Endothelial cell of umbilical vein (primary cell): ENCODE measurements at regions of chr1 and their contacts with region 1.

Region 1: DNA sequence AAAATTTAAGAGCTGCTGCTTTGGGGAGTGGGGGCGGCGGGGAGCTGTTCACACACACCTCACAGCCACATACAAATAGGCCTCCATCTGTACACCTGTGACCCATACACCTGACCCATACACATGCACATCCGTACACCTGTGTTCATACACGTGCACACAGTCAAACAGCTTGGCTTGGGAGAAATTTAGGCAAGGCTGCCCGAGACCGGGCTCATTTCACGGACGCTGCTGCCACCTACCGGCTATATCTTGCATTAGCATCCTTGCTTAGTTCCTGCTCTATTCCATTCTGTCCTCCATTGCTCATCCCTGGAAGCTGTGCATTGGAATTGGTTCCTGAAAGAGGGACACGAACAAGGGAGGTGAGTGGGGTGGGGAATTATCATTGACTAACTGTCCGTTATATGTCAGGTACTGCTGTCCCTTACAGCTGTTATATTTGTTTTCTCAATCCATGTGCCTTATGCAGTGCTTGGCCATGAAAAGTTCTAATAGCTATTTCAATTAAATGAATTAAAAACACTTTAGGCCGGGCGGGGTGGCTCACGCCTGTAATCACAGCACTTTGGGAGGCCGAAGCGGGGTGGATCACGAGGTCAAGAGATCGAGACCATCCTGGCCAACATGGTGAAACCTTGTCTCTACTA is 37.1 kb upstream of the EPB41 start:
- DNase-seq: peak; percentile 73
- H3K4me3 ChIP-seq: no peak overlapping the region
- H3K27ac ChIP-seq: no peak overlapping the region
- H3K4me1 ChIP-seq: no peaks in the 10 kb centered on the region
- H3K27me3 ChIP-seq: no peaks in the 10 kb centered on the region
- CTCF ChIP-seq: peak; percentile 86 to 92
- POLR2A ChIP-seq: no peak

Region 2: DNA sequence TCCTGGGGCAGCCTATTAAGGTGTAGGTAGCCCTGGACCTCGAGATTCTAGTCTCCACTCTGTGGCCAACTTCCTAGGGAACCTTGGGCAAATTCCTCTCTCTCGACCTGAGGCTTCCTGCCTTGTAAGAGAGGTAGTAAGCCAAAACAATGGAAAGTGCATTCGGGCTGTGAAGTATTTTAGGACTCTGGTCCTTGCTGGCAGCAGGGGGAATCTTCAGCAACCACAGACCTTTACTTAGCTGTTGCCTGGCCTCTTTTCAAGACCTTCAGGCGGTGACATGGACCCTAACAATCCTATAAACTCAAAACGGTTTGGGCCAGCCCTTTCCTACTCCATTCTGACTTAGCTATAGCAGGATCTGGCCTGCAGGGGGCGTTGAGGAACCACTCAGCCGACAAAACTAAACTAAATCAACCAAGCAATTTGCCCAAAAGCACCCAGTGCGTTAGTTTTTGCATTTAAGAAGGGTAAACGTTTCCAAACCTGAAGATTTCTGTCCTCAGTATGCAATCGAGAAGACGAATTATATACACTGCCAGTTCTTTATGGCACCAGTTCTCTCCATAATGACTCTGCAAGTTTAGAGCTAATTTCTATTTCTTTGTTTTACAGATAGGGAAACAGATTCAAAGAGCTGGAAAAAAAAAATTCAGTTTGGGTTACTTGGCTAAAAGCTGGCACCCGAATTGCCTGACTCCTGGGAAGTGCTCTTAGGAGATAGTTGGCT is 628.8 kb before region 1 on chr1:
- CTCF ChIA-PET with region 1: interaction called, 15 read pairs
- POLR2A ChIA-PET with region 1: no interaction called
- dilution Hi-C with region 1: no loop called
- intact Hi-C with region 1: loop called (anchors 2 kb)
- DNase-seq: peak; percentile 85
- H3K4me3 ChIP-seq: peak overlapping the region in 1 of 3 experiments; percentile 10
- H3K27ac ChIP-seq: peak overlapping the region; percentile 22
- H3K4me1 ChIP-seq: peaks cover 25% of the 10 kb centered on the region
- H3K27me3 ChIP-seq: no peaks in the 10 kb centered on the region
- CTCF ChIP-seq: peak; percentile 91 to 96
- POLR2A ChIP-seq: no peak

Region 3: DNA sequence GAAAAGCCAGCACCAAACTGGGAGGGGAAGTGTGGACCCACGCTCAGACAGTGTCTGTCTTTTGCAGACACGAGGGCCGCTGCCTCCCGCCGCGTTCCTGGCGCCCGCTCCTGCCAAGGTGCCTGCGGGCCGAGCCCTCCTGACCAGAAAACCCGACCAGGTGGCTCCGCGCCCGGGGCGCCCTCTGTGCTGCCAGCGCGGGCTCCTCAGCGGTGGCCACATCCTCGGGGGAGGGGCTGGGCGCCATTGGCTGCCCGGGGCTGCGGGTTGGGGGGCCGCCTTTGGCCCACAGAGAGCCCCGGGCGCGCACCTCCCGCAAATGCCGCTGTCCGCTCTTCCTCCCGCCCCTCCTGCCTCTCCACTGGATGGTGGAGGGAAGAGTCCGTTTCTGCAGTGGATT is 346.8 kb before region 1 on chr1:
- CTCF ChIA-PET with region 1: no interaction called
- POLR2A ChIA-PET with region 1: no interaction called
- dilution Hi-C with region 1: no loop called
- intact Hi-C with region 1: no loop called
- DNase-seq: no peak
- H3K4me3 ChIP-seq: no peak overlapping the region
- H3K27ac ChIP-seq: no peak overlapping the region
- H3K4me1 ChIP-seq: no peaks in the 10 kb centered on the region
- H3K27me3 ChIP-seq: no peaks in the 10 kb centered on the region
- CTCF ChIP-seq: no peak
- POLR2A ChIP-seq: no peak

Region 4: DNA sequence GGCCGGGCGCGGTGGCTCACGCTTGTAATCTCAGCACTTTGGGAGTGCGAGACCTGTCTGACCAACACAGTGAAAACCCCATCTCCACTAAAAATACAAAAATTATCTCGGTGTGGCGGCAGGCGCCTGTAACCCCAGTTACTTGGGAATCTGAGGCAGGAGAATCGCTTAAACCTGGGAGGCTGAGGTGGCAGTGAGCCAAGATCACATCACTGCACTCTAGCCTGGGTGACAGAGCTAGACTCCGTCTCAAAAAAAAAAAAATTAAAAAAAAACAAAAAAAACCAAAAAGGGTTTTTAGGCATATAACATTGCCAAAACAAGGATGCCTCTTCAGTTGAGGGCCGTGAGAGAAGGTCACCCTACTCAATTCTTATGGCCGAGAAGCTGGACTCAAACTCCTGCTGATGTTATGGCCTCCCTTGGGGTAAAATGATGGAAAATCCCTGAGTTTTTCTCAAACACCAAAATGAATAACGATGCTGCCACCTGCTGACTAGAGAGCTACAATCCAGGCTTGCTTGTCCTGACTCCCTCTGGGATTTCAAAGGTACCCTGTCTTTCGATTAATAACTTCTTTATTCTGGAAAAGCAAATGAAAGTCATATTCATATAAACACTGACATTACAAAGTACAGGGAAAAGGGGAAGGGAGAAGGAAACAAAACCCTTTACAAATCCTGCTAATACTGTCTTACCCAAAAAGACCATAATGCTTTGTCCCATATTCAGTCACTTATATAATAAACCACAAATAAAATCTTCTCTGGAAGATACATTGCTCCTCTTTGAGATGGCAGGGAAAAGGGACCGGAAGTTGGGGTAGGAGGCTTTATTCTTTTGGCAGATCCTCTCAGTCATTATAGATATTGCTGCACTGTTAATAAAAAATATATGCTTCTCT is 274.5 kb before region 1 on chr1:
- CTCF ChIA-PET with region 1: interaction called, 14 read pairs
- POLR2A ChIA-PET with region 1: no interaction called
- dilution Hi-C with region 1: no loop called
- intact Hi-C with region 1: loop called (anchors 2 kb)
- DNase-seq: peak; percentile 72
- H3K4me3 ChIP-seq: no peak overlapping the region
- H3K27ac ChIP-seq: no peak overlapping the region
- H3K4me1 ChIP-seq: peaks cover 8% of the 10 kb centered on the region
- H3K27me3 ChIP-seq: no peaks in the 10 kb centered on the region
- CTCF ChIP-seq: peak; percentile 63 to 64
- POLR2A ChIP-seq: no peak

Region 5: DNA sequence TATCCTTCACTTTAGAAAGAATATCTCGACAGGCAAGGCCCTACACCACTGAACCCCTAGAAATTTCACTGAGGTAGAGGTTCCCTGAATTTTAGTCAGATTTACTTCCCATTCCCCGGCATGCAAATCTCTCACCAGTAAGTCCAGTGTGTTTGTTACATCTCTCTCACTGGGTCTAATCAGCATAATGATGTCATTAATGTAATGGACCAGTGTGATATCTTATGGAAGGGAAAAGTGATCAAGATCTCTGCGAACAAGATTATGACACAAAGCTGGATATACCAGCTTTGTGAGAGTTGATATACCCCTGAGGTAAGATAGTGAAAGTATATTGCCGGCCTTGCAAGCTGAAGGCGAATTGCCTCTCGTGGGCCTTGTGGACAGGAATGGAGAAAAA is 220.9 kb before region 1 on chr1:
- CTCF ChIA-PET with region 1: interaction called, 18 read pairs
- POLR2A ChIA-PET with region 1: no interaction called
- dilution Hi-C with region 1: no loop called
- intact Hi-C with region 1: no loop called
- DNase-seq: no peak
- H3K4me3 ChIP-seq: no peak overlapping the region
- H3K27ac ChIP-seq: no peak overlapping the region
- H3K4me1 ChIP-seq: no peaks in the 10 kb centered on the region
- H3K27me3 ChIP-seq: no peaks in the 10 kb centered on the region
- CTCF ChIP-seq: no peak
- POLR2A ChIP-seq: no peak

Region 6: DNA sequence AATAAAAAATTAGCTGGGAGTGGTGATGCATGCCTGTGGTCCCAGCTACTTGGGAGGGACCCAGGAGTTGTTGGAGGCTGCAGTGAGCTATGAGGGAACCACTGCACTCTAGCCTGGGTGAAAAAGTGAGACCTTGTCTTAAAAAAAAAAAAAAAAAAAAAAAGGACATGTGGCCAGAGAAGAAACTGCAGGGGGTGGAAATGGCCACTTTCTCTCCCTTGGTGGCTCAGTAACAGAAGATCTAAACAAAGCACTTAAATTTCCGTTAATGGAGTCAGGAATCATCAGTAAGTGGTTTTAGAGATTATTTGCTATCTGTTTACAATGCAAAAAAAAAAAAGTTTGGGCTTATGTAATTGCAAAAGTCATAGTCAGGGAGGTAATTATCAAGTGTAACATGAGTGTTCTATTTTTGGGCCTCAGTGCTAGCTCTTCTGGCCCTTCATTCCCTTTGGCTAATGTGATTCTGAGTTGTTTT is 84.6 kb before region 1 on chr1:
- CTCF ChIA-PET with region 1: interaction called, 259 read pairs
- POLR2A ChIA-PET with region 1: no interaction called
- dilution Hi-C with region 1: no loop called
- intact Hi-C with region 1: no loop called
- DNase-seq: no peak
- H3K4me3 ChIP-seq: no peak overlapping the region
- H3K27ac ChIP-seq: no peak overlapping the region
- H3K4me1 ChIP-seq: no peaks in the 10 kb centered on the region
- H3K27me3 ChIP-seq: peaks cover 2 to 4% of the 10 kb centered on the region in 2 experiments
- CTCF ChIP-seq: no peak
- POLR2A ChIP-seq: no peak

Region 7: GRCh38 chr1:29011775-29012174 is 134.5 kb after region 1 on chr1:
- CTCF ChIA-PET with region 1: no interaction called
- POLR2A ChIA-PET with region 1: no interaction called
- dilution Hi-C with region 1: no loop called
- intact Hi-C with region 1: no loop called
- DNase-seq: no peak
- H3K4me3 ChIP-seq: no peak overlapping the region
- H3K27ac ChIP-seq: no peak overlapping the region
- H3K4me1 ChIP-seq: no peaks in the 10 kb centered on the region
- H3K27me3 ChIP-seq: no peaks in the 10 kb centered on the region
- CTCF ChIP-seq: no peak
- POLR2A ChIP-seq: no peak

Region 8: DNA sequence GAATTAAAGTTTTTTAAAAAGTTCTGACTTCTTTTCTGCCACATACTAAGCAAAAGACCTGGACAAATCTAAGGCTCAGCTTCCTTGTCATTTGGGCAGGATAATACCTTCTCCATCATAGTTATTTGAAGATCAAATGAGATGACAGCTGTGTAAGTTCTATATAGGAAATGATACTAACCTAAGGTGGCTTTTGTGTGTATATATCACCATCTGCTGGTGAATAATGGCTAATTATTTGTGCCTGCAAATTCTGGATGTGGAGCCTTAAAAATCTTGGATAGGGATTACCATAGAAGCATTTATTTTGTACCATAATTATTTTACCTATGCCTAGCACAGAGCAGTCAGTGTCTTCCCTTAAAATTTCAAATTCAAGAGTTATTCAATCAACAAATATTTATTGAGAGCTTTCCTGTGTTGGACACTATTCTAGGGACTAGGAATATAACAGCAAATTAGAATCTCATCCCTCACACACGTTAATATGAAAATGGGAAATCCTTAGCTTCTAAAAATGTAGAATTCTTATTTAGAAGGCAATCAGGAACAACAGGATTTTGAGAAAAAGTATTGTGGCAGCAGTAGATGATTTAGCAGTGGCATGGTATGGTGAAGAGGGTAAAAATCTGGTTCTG is 156.7 kb after region 1 on chr1:
- CTCF ChIA-PET with region 1: interaction called, 389 read pairs
- POLR2A ChIA-PET with region 1: no interaction called
- dilution Hi-C with region 1: no loop called
- intact Hi-C with region 1: loop called (anchors 1 kb)
- DNase-seq: peak; percentile 75
- H3K4me3 ChIP-seq: no peak overlapping the region
- H3K27ac ChIP-seq: no peak overlapping the region
- H3K4me1 ChIP-seq: peaks cover 4% of the 10 kb centered on the region
- H3K27me3 ChIP-seq: no peaks in the 10 kb centered on the region
- CTCF ChIP-seq: peak; percentile 28 to 31
- POLR2A ChIP-seq: no peak

Region 9: DNA sequence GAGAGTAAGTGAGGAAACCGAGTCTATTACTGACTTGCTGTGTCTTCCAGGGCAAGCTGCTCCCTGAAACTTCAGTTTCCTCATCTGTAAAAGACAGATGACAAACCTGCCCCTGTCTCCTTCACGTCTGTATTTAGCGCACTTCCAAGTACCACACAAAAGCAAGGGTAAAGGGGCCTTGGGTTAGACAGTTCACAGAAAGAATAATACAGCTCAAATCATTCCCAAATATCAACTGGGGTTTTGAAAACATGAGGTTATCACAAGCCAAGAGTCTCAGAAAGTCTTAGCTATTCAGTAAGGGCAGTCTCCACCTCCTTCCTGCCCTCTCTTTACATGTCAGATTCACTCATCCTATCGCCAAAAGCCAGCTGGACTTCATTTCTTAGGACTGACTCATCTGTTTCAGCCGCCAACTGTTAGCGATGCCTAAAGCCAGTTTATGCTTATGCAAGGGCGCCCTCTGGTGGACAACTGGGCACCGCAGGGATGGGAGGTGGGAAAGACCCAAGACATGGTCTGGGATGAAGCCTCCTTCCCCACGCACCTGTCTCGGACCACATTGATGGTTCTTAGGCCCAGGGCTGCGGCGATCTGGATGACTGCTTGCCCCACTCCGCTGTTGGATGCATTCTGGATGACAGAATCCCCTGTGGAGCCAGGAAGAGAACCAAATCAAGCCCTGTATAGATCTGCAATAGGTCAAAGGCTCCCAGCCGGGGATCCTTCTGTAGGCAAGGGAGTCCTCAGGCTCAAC is 325.5 kb after region 1 on chr1:
- CTCF ChIA-PET with region 1: interaction called, 133 read pairs
- POLR2A ChIA-PET with region 1: no interaction called
- dilution Hi-C with region 1: no loop called
- intact Hi-C with region 1: loop called (anchors 1 kb)
- DNase-seq: peak; percentile 96
- H3K4me3 ChIP-seq: no peak overlapping the region
- H3K27ac ChIP-seq: peak overlapping the region; percentile 63
- H3K4me1 ChIP-seq: peaks cover 10% of the 10 kb centered on the region
- H3K27me3 ChIP-seq: no peaks in the 10 kb centered on the region
- CTCF ChIP-seq: peak; percentile 89 to 97
- POLR2A ChIP-seq: no peak

Region 10: GRCh38 chr1:29519788-29520110 is 642.5 kb after region 1 on chr1:
- CTCF ChIA-PET with region 1: no interaction called
- POLR2A ChIA-PET with region 1: no interaction called
- dilution Hi-C with region 1: no loop called
- intact Hi-C with region 1: no loop called
- DNase-seq: no peak
- H3K4me3 ChIP-seq: no peak overlapping the region
- H3K27ac ChIP-seq: no peak overlapping the region
- H3K4me1 ChIP-seq: no peaks in the 10 kb centered on the region
- H3K27me3 ChIP-seq: no peaks in the 10 kb centered on the region
- CTCF ChIP-seq: no peak
- POLR2A ChIP-seq: no peak